Psoas muscle (tissue), 8 donors: ENCODE measurements at regions of chr9 and their contacts with region 1.

Region 1: DNA sequence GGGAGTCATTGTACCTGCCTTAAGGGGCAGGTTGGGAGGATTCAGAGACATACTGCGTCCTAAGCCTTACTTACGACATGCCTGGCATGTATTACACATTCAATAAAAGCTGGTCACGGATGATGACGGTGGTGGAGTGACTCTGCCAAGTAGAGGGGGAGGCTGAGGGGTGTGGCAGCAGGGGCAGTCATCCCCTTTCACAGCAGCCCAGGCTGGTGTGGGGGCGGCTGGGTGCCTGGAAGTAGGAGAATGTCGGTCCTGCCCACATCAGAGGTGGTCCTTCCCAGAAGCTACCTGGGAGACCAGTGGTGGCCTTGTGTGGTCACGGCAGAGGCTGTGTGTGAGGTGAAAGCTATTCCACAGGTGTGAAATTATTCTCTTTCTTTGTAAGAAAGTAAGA is 8.9 kb downstream of the ZBTB34 start:
- DNase-seq: no peak
- ATAC-seq: peak; percentile 21 to 65 (median 48)
- H3K4me3 ChIP-seq: no peak overlapping the region
- H3K27ac ChIP-seq: no peak overlapping the region
- H3K4me1 ChIP-seq: peaks cover 52% of the 10 kb centered on the region
- H3K27me3 ChIP-seq: no peaks in the 10 kb centered on the region
- CTCF ChIP-seq: no peak

Region 2: DNA sequence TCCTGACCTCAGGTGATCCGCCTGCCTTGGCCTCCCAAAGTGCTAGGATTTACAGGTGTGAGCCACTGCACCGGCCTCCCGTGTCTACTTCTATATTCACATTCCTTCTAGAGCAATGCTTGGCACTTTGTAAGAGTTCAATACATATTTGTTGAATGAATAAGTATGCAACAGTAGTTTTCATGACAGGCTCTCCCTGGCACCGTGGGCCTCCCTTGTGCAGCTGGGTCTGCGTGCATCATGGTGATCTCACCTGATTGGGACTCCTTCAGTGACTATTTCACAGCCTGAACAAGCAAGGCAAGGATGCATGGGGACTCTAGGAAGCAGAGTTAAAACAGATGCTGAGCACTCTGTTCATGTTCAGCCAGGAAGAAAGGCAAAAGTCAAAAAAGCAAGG is 15.7 kb before region 1 on chr9:
- intact Hi-C with region 1: no loop called
- DNase-seq: no peak
- ATAC-seq: no peak
- H3K4me3 ChIP-seq: no peak overlapping the region
- H3K27ac ChIP-seq: no peak overlapping the region
- H3K4me1 ChIP-seq: peaks cover 4% of the 10 kb centered on the region
- H3K27me3 ChIP-seq: no peaks in the 10 kb centered on the region
- CTCF ChIP-seq: no peak

Region 3: GRCh38 chr9:126893079-126893478 is 23.7 kb after region 1 on chr9:
- intact Hi-C with region 1: loop called in 1 of 2 experiments (anchors 1 kb)
- DNase-seq: no peak
- ATAC-seq: no peak
- H3K4me3 ChIP-seq: no peak overlapping the region
- H3K27ac ChIP-seq: no peak overlapping the region
- H3K4me1 ChIP-seq: no peaks in the 10 kb centered on the region
- H3K27me3 ChIP-seq: no peaks in the 10 kb centered on the region
- CTCF ChIP-seq: no peak

Region 4: GRCh38 chr9:126904586-126904985 is 35.2 kb after region 1 on chr9:
- intact Hi-C with region 1: no loop called
- DNase-seq: no peak
- ATAC-seq: no peak
- H3K4me3 ChIP-seq: no peak overlapping the region
- H3K27ac ChIP-seq: no peak overlapping the region
- H3K4me1 ChIP-seq: no peaks in the 10 kb centered on the region
- H3K27me3 ChIP-seq: no peaks in the 10 kb centered on the region
- CTCF ChIP-seq: no peak